ENCODE measurements at regions of chr7 and their contacts with region 1.

Region 1: GRCh38 chr7:30478349-30479201 is at the start of gene NOD1:
- DNase-seq: peak; percentile 73
- H3K4me3 Mint-ChIP-seq: peak within 1 kb of the TSS; percentile 89
- H3K27ac Mint-ChIP-seq: peak within 1 kb of the TSS; percentile 87
- H3K4me1 Mint-ChIP-seq: peaks cover 52% of the 10 kb centered on the region
- H3K27me3 Mint-ChIP-seq: no peaks in the 10 kb centered on the region
- total RNA-seq, gene NOD1: 9.2 to 9.8 TPM

Region 2: GRCh38 chr7:30330134-30331111 is 148.2 kb before region 1 on chr7:
- CTCF ChIA-PET with region 1: interaction called, 3 read pairs
- intact Hi-C with region 1: loop called (anchors 5 kb)
- DNase-seq: peak; percentile 52
- H3K4me3 Mint-ChIP-seq: peak overlapping the region; percentile 54
- H3K27ac Mint-ChIP-seq: peak overlapping the region; percentile 48
- H3K4me1 Mint-ChIP-seq: peaks cover 44% of the 10 kb centered on the region
- H3K27me3 Mint-ChIP-seq: no peaks in the 10 kb centered on the region

Region 3: DNA sequence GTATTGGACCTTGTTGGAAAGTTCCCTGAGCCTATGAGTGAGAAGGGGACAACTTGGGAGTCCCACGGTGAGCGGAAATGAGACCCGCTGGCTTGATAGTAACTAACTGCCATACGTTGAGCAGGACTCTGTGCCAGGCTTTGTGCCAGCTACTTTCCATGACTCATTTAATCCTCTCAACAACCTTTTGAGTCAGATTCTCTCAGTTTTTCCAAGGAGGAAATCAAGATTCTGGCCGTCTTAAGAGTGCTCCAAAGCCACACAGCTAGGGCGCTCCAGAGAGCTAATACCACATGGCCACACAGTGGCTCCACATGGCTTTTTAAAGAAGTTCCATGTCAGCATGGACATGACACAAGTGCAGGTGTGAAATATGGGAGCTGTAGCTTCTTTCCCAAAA is 55.7 kb before region 1 on chr7:
- CTCF ChIA-PET with region 1: no interaction called
- intact Hi-C with region 1: no loop called
- DNase-seq: peak; percentile 8
- H3K4me3 Mint-ChIP-seq: no peak overlapping the region
- H3K27ac Mint-ChIP-seq: no peak overlapping the region
- H3K4me1 Mint-ChIP-seq: peaks cover 3% of the 10 kb centered on the region
- H3K27me3 Mint-ChIP-seq: no peaks in the 10 kb centered on the region

Region 4: DNA sequence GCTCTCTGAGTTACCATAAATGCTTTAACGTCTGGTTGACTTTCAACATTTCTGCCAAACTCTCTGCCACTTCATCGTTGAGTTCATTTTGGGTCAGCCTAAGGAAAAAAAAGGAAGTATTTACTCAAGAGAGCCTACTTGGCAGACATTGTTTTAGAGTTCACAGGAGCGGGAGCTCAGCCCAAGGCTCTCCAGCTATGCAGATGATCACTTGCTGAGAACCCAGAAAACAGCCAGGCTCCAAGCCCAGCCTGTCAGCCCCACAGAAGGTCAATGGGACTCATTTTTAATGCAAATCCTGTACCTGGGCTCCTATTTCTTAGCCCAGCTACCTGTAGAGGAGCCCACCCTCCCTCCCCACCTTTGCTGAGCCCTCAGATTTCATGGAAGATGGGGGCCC is 45.5 kb before region 1 on chr7:
- CTCF ChIA-PET with region 1: no interaction called
- intact Hi-C with region 1: no loop called
- DNase-seq: no peak
- H3K4me3 Mint-ChIP-seq: no peak overlapping the region
- H3K27ac Mint-ChIP-seq: no peak overlapping the region
- H3K4me1 Mint-ChIP-seq: no peaks in the 10 kb centered on the region
- H3K27me3 Mint-ChIP-seq: no peaks in the 10 kb centered on the region

Region 5: DNA sequence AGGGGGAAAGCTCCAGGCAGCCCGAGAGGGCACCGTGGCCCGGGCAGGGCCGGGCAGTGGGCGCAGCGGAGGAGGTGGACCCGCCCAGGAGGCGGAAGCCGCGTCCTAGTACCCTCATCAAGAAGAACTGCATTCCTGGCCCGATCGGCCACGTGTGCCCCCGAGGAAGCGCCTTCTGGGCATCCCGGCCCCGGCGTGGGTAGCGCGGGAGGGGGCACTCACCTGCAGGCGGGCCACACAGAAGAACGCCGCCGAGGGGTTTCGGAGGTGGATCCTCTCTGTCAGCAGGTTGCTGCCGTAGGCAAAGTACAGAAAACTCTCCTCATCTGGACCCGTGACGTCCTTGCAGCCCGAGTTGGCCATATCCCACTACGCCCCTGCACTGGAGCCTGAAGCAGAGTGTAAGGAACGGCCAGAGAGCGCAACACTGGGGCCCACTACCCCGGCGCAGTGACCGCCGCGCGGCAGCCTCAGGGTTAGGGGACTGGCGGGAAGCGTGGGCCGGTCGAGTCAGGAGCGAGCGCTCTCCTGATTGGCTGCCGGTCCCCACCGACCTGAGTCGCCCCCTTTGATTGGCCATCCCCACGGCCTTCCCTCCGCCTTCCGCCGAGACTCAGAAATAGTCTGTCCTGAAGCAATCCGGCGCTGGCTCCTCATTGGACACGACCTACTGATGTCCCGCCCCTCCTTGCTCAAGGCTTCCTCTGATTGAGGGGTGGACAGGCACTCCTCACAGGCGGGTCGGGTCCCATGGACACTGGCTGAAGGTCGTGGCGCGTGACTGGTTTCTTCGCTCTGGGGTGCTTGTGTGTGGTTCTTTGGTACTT is 26.0 kb after region 1 on chr7 and contains the start of gene GGCT:
- CTCF ChIA-PET with region 1: no interaction called
- intact Hi-C with region 1: loop called (anchors 1 kb)
- DNase-seq: peak; percentile 99
- H3K4me3 Mint-ChIP-seq: peak within 1 kb of the TSS; percentile 82
- H3K27ac Mint-ChIP-seq: peak within 1 kb of the TSS; percentile 85
- H3K4me1 Mint-ChIP-seq: peaks cover 38% of the 10 kb centered on the region
- H3K27me3 Mint-ChIP-seq: no peaks in the 10 kb centered on the region
- total RNA-seq, gene GGCT: 83.0 to 83.8 TPM

Measured in activated naive CD4-positive, alpha-beta T cell treated with anti-CD3 and anti-CD28 coated beads for 36 hours (primary cell).